HCT116 (cell line): ENCODE measurements at regions of chr1 and their contacts with region 1.

Region 1: DNA sequence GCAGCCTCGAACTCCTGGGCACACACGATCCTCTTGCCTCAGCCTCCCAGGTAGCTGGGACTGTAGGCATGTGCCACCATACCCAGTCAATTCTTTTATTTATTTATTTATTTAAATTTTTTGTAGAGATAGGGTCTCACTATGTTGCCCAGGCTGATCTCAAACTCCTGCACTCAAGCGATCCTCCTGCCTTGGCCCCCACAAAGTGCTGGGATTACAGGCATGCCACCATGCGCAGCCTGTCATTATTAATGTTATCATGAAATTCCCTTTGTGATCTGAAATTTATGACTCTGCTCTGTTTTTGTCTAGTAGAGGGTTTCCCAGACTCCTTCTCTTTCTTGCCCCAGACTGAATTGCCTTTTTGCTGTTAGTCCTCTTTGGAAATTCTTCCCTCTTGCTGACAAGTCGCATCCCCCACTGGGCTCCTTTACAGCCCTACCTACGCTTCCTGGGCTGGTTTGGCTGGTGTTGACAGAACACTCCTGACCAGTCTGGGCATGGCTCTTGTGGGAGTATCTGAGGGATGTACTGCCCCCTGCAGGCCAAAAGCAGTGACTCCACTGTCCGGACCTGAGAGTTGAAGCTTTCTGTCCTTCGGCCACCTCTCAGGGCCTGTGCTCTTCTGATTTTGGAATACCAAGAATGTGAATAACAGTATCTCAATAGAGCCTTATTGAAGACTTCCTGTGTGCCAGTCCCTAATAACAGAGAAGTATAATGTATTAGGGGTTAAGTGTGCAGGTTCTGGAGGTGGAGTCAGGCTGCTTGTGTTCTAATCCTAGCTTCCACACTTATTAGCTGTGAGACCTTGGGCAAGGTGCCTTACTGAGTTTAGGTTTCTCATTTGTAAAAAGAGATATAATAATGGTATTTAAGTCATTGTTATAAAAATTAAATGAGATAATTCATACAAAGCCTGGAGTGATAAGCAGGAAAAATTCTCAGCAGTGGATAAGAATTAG is 28.2 kb downstream of the TCEANC2 start:
- DNase-seq: peak; percentile 63
- ATAC-seq: peak; percentile 100
- H3K4me3 ChIP-seq: no peak overlapping the region
- H3K27ac ChIP-seq: no peak overlapping the region
- H3K4me1 ChIP-seq: peaks cover 0 to 7% of the 10 kb centered on the region in 2 experiments; a peak in 2 of 4 replicates
- H3K27me3 ChIP-seq: no peaks in the 10 kb centered on the region
- CTCF ChIP-seq: peak; percentile 77 to 97 (median 96)
- POLR2A ChIP-seq: no peak
- RAD21 ChIP-seq: peak; percentile 75

Region 2: GRCh38 chr1:53511933-53512806 is 569.4 kb before region 1 on chr1:
- CTCF ChIA-PET with region 1: no interaction called
- POLR2A ChIA-PET with region 1: no interaction called
- RAD21 ChIA-PET with region 1: no interaction called
- intact Hi-C with region 1: no loop called
- DNase-seq: no peak
- ATAC-seq: no peak
- H3K4me3 ChIP-seq: no peak overlapping the region
- H3K27ac ChIP-seq: no peak overlapping the region
- H3K4me1 ChIP-seq: peaks cover 0 to 7% of the 10 kb centered on the region in 2 experiments; a peak in 2 of 4 replicates
- H3K27me3 ChIP-seq: no peaks in the 10 kb centered on the region
- CTCF ChIP-seq: no peak
- POLR2A ChIP-seq: no peak
- RAD21 ChIP-seq: no peak

Region 3: GRCh38 chr1:54070171-54070837 is 11.3 kb before region 1 on chr1:
- CTCF ChIA-PET with region 1: interaction called, 10 read pairs
- POLR2A ChIA-PET with region 1: no interaction called
- RAD21 ChIA-PET with region 1: no interaction called
- intact Hi-C with region 1: no loop called
- DNase-seq: peak; percentile 43
- ATAC-seq: peak; percentile 95
- H3K4me3 ChIP-seq: no peak overlapping the region
- H3K27ac ChIP-seq: no peak overlapping the region
- H3K4me1 ChIP-seq: peaks cover 0 to 4% of the 10 kb centered on the region in 2 experiments; a peak in 1 of 4 replicates
- H3K27me3 ChIP-seq: no peaks in the 10 kb centered on the region
- CTCF ChIP-seq: peak; percentile 76 to 100 (median 92)
- POLR2A ChIP-seq: no peak
- RAD21 ChIP-seq: peak; percentile 91

Region 4: DNA sequence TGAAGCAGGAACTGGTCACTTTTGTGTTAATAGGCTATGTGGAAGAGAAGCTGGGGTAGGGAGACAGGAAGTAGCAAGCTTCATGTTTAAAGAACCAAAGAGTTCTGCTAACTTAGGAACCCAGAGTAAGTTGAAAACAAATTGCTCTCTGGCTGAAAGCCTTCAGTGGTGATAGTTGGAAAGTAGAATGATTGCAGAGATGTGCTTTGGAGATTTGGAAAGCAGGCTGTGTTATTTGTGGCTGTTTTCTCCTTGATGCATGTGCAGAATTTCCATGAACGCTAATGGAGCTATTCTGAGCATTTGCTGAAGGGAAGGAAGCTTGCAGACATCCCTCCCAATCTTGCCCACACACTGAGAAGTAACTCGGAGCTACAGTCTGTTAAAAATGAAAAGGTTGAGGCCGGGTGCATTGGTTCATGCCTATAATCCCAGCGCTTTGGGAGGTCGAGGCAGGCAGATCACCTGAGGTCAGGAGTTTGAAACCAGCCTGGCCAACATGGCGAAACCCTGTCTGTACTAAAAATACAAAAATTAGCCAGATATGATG is 17.5 kb after region 1 on chr1:
- CTCF ChIA-PET with region 1: interaction called, 14 read pairs
- POLR2A ChIA-PET with region 1: no interaction called
- RAD21 ChIA-PET with region 1: no interaction called
- intact Hi-C with region 1: no loop called
- DNase-seq: no peak
- ATAC-seq: no peak
- H3K4me3 ChIP-seq: no peak overlapping the region
- H3K27ac ChIP-seq: no peak overlapping the region
- H3K4me1 ChIP-seq: no peaks in the 10 kb centered on the region
- H3K27me3 ChIP-seq: no peaks in the 10 kb centered on the region
- CTCF ChIP-seq: no peak
- POLR2A ChIP-seq: no peak
- RAD21 ChIP-seq: no peak